H1 (cell line): ENCODE measurements at regions of chr5 and their contacts with region 1.

Region 1: GRCh38 chr5:137743031-137743640 is 7.2 kb upstream of the KLHL3 start:
- DNase-seq: peak in 1 of 2 experiments; percentile 49
- H3K4me3 ChIP-seq: no peak overlapping the region
- H3K27ac ChIP-seq: no peak overlapping the region
- H3K4me1 ChIP-seq: no peaks in the 10 kb centered on the region
- H3K27me3 ChIP-seq: peaks cover 0 to 1% (median 0%) of the 10 kb centered on the region in 4 experiments; a peak in 1 of 7 replicates
- CTCF ChIP-seq: peak; percentile 25 to 70 (median 58)
- EP300 ChIP-seq: no peak
- POLR2A ChIP-seq: no peak
- RAD21 ChIP-seq: peak; percentile 66 to 69

Region 2: DNA sequence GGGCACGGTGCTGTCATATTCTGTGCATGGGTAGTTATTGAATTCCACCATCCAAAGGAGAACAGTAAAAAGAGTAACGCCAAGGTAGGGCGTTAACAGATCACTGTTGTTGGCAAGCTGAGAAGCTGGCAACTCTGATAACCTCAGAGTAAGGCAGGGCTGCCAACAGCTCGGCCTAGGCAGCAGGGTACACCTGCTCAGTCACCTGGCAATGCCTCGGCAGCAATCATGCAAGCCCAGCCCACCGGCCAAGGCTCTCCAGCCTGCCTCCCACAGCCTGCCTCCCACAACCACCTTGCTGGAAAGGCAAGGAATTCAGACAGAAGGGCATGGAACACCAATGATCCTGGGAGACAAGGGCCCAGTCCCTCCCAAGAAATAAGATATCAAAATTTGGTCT is 71.1 kb before region 1 on chr5:
- CTCF ChIA-PET with region 1: interaction called, 13 read pairs
- POLR2A ChIA-PET with region 1: no interaction called
- DNase-seq: no peak
- H3K4me3 ChIP-seq: no peak overlapping the region
- H3K27ac ChIP-seq: no peak overlapping the region
- H3K4me1 ChIP-seq: no peaks in the 10 kb centered on the region
- H3K27me3 ChIP-seq: no peaks in the 10 kb centered on the region
- CTCF ChIP-seq: no peak
- EP300 ChIP-seq: no peak
- POLR2A ChIP-seq: no peak
- RAD21 ChIP-seq: no peak

Region 3: DNA sequence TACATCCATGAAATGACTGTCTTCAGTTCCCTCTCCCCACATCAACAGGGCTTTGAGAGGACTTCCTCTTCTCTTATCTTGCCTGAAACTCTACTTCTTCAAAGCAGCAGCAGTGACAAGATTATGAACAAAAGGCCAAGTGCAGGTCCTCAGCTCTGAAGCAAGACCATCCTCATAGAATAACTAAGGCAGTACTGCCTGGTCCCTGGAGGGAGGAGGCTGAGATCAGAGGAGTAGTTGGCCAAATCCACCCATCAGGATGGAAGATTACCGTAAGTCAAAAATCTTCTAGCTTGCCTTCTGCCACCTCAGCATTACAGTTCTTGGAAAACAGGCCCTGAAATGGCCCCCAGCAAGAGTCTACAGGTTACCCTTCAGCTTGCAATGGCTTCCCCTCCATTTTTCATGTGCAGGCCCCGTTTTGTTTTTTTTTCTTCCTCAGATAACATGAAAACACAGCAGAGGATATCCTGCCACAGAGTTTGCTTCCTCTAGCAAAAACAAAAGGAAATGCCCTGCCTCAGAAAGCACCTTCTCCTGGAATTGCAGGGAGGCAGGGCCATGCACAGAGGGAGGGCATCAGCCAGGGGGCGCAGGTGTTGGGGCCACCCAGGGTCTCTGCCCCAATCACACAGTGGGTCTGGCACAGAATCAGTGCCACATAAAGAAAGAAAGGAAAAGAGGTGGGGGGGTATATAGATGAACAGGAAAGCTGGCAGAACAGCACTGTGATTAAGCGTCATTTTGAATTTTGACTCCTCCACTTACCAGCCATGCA is 47.3 kb before region 1 on chr5:
- CTCF ChIA-PET with region 1: interaction called, 10 read pairs
- POLR2A ChIA-PET with region 1: no interaction called
- DNase-seq: peak in 1 of 2 experiments; percentile 48
- H3K4me3 ChIP-seq: no peak overlapping the region
- H3K27ac ChIP-seq: no peak overlapping the region
- H3K4me1 ChIP-seq: peaks cover 0 to 2% (median 0%) of the 10 kb centered on the region in 4 experiments; a peak in 3 of 7 replicates
- H3K27me3 ChIP-seq: no peaks in the 10 kb centered on the region
- CTCF ChIP-seq: peak; percentile 17 to 49 (median 33); a peak in 2 of 4 replicates
- EP300 ChIP-seq: no peak
- POLR2A ChIP-seq: no peak
- RAD21 ChIP-seq: no peak; a peak in 1 of 4 replicates

Region 4: GRCh38 chr5:137730336-137730735 is 12.8 kb before region 1 on chr5:
- CTCF ChIA-PET with region 1: interaction called, 17 read pairs
- POLR2A ChIA-PET with region 1: interaction called, 4 read pairs
- DNase-seq: no peak
- H3K4me3 ChIP-seq: no peak overlapping the region
- H3K27ac ChIP-seq: no peak overlapping the region
- H3K4me1 ChIP-seq: peaks cover 0 to 8% (median 4%) of the 10 kb centered on the region in 4 experiments; a peak in 5 of 7 replicates
- H3K27me3 ChIP-seq: no peaks in the 10 kb centered on the region
- CTCF ChIP-seq: no peak
- EP300 ChIP-seq: no peak
- POLR2A ChIP-seq: no peak
- RAD21 ChIP-seq: no peak

Region 5: GRCh38 chr5:137754126-137754960 is 11.2 kb after region 1 on chr5 and contains the start of gene HNRNPA0:
- CTCF ChIA-PET with region 1: interaction called, 28 read pairs
- POLR2A ChIA-PET with region 1: interaction called, 27 read pairs
- DNase-seq: peak; percentile 82 to 96
- H3K4me3 ChIP-seq: peak within 1 kb of the TSS; percentile 92 to 100 (median 100)
- H3K27ac ChIP-seq: peak within 1 kb of the TSS; percentile 100
- H3K4me1 ChIP-seq: peaks cover 0 to 3% (median 0%) of the 10 kb centered on the region in 4 experiments; a peak in 3 of 7 replicates
- H3K27me3 ChIP-seq: no peaks in the 10 kb centered on the region
- CTCF ChIP-seq: no peak
- EP300 ChIP-seq: peak; percentile 18 to 100; a peak in 2 of 3 replicates
- POLR2A ChIP-seq: peak; percentile 97 to 99
- RAD21 ChIP-seq: no peak; a peak in 1 of 4 replicates
- total RNA-seq, gene HNRNPA0: 71.3 and 74.9 TPM in 2 replicates

Region 6: DNA sequence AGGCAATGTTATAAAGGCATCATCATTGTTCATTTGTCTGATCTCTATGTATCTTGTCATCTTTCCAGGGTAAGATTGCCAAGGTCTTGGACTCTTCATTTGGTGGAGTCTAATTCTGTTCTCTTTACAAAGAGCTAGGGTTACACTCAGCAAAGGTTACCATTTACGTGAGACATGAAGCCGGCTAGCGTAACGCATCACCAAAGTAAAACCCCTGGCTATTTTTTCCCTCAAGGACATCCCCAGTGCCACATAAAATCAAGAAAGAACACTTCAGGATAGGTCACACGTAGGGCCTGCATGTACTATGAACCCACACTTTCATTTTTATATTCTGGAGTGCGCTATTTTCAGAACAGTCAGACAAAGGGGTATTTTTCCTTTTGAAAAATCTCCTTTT is 104.6 kb after region 1 on chr5:
- CTCF ChIA-PET with region 1: no interaction called
- POLR2A ChIA-PET with region 1: no interaction called
- DNase-seq: no peak
- H3K4me3 ChIP-seq: no peak overlapping the region
- H3K27ac ChIP-seq: no peak overlapping the region
- H3K4me1 ChIP-seq: no peaks in the 10 kb centered on the region
- H3K27me3 ChIP-seq: no peaks in the 10 kb centered on the region
- CTCF ChIP-seq: no peak
- EP300 ChIP-seq: no peak
- POLR2A ChIP-seq: no peak
- RAD21 ChIP-seq: no peak